Activated naive CD4-positive, alpha-beta T cell treated with anti-CD3 and anti-CD28 coated beads, Interleukin-2, amount 10 ng/mL, durations not matched to agents 7 days and 5 days (primary cell): ENCODE measurements at regions of chr1 and their contacts with region 1.

Region 1: DNA sequence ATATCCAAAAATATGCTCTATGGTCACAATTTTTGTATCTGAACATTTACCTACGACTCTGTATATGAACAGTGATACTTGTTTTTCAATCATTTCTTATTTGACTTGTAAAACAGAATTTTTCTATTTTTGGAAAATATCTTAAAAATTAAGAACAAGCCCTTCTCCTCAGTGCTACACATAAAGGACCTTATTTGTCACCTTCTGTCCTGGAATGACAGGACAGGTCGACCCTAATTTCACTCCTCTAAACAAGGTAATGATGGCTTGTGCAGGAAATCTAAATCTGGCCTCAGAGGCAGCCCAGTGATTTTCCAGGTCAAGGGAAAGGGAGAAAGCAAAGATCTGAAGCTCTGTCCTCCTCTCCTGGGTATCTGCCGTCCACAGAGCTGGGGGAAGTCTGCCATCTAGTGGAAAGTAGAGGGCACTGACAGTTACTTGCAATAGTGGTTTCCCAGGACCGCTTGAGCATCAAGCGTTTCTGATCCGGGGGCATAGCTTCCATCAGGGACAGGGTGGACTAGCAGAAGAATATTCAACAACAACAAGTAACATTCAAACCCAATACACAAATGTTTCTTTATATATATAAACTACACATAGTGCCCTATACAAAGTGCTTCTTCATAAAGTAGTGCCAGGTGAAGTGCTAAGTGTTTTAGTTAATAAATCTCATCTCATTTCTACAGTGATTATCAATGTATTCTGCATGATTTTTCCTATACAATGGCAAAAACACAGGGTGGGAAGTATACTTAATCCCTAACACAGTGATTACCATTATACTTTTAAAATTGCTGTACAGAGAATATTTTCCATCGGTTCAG is 74.6 kb downstream of the SLC25A24 start:
- DNase-seq: peak; percentile 74
- H3K4me3 Mint-ChIP-seq: no peak overlapping the region
- H3K27ac Mint-ChIP-seq: no peak overlapping the region
- H3K4me1 Mint-ChIP-seq: no peaks in the 10 kb centered on the region
- H3K27me3 Mint-ChIP-seq: peaks cover 17% of the 10 kb centered on the region

Region 2: DNA sequence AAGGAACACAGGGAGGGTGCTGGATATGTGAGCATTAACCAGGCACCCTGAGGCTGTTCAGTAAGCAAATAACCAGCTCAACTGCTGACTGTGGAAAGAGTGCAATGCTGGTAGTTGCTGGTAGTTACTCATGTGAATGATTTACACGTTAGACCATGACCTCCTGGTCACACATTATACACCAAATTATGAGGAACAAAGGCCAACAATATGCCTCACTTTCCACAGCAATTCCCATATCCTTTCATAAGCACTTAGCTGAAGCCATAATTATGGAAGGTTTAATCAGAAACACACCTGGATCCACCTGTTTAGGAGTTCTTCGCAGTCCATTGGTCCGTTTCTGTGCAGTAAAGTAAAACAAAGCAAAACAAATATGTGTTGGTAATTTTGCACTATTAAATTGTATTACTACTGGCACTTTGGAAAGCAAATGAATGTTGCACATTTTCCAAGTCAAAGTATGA is 442.3 kb before region 1 on chr1:
- CTCF ChIA-PET with region 1: no interaction called
- DNase-seq: no peak
- H3K4me3 Mint-ChIP-seq: no peak overlapping the region
- H3K27ac Mint-ChIP-seq: no peak overlapping the region
- H3K4me1 Mint-ChIP-seq: no peaks in the 10 kb centered on the region
- H3K27me3 Mint-ChIP-seq: no peaks in the 10 kb centered on the region

Region 3: DNA sequence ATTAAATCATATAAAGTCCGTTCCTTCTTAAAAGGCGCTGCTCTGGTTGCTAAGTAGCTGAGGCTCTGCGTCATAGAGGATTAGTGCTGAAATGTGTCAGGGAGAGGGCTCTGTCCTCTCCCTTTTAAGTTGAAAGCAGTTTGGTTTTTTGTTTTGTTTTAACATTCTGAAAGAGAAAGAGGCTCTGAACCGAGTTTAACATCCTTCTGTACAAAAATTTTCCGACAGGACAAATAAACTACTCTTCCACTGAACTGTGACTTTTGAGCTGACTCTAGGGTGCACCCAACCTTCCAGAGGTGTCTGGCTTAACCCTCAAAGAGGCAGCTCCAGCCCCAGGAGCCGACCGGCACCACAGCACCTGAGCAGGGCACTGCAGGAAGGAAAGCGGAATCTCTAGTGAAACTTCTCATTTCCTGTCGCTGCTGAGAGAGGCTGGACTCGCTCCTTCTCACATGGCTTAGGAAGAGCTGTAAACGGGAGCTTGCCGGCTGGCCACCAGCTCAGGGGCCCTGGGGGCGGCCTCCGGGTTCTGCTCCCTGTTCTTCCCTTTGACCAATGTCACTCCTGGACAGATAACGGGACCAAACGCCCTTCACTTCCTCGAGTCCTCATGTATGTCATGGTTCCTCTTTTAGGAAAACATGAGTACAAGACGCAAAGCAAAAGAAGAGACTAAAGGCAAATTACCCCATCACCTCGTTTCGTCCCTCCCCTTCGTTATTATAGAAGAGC is 161.8 kb before region 1 on chr1:
- CTCF ChIA-PET with region 1: interaction called, 26 read pairs
- DNase-seq: peak; percentile 62
- H3K4me3 Mint-ChIP-seq: peak overlapping the region; percentile 82
- H3K27ac Mint-ChIP-seq: peak overlapping the region; percentile 93
- H3K4me1 Mint-ChIP-seq: peaks cover 34% of the 10 kb centered on the region
- H3K27me3 Mint-ChIP-seq: peaks cover 14% of the 10 kb centered on the region

Region 4: GRCh38 chr1:107992347-107992746 is 133.2 kb before region 1 on chr1:
- CTCF ChIA-PET with region 1: no interaction called
- DNase-seq: no peak
- H3K4me3 Mint-ChIP-seq: no peak overlapping the region
- H3K27ac Mint-ChIP-seq: no peak overlapping the region
- H3K4me1 Mint-ChIP-seq: no peaks in the 10 kb centered on the region
- H3K27me3 Mint-ChIP-seq: no peaks in the 10 kb centered on the region

Region 5: GRCh38 chr1:108208724-108209429 is 83.4 kb after region 1 on chr1:
- CTCF ChIA-PET with region 1: no interaction called
- DNase-seq: no peak
- H3K4me3 Mint-ChIP-seq: no peak overlapping the region
- H3K27ac Mint-ChIP-seq: no peak overlapping the region
- H3K4me1 Mint-ChIP-seq: peaks cover 5% of the 10 kb centered on the region
- H3K27me3 Mint-ChIP-seq: peaks cover 54% of the 10 kb centered on the region